Astrocyte of the cerebellum (primary cell): ENCODE measurements at regions of chr9 and their contacts with region 1.

Region 1: DNA sequence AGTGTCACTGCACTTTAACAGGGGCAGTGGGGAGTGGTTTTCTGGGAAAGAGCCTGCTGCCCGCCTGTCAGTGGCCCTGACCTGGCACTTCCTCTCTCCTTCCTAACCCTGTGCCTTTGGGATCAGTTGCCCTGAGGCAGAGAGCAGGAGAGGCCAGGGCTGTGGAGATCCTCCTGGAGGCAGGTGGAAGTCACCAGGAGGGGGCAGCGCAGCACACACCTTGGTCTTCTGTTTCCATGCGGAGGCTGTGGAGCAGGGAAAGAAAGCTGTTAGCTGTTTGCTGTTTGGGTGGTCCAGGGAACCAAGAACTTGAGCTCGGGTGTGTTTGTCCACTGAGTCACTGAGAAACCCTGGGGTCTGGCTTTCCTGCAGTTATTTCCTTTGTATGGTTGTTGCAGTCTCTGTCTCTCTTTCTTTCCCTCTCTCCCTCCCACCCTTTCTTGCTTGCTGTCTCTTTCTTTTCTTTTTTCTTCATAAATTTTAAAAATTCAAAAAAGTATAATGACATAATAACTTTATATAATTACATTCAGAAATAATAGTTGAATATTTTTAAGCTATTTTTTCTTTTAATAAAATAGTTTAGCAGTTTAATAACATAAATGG is 28.1 kb downstream of the NTRK2 start:
- DNase-seq: peak; percentile 66
- H3K4me3 ChIP-seq: no peak overlapping the region
- CTCF ChIP-seq: peak; percentile 83

Region 2: GRCh38 chr9:84652577-84653061 is 45.0 kb before region 1 on chr9:
- in situ Hi-C with region 1: no loop called
- DNase-seq: no peak
- H3K4me3 ChIP-seq: no peak overlapping the region
- CTCF ChIP-seq: no peak

Region 3: DNA sequence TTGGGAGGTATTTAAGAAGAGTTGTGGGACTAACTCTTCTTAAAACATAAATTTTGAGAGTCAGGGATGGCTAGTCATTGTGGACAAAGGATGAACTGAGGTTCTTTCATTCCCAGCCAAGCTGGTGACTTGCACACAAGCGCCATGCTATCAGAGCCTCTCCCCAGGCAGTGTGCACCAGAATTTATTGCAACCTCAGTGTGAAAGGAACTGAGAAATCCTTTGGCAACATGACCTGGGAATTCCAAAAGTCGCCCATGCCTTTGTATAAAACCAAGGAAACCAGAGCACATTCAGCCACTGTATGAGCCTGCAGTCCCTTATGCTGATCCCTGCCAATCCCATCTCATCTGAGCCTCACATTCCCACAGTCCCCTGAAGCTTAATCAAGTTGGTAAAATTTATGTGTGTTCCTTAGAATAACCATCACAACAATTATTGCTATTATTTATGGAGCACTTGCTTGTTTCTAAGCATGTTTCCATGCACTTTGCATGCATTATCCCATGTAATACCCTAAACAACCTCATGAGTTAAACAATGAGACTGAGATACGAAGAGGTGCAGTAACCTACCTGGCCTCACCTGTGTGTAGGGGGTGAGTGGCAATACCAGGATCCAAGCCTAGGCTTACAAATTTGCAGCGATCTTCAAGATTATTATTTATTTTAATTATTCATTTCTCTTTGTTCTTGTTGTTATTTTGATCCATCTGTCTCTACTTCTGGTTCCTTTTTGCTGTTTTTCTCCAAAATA is 88.4 kb after region 1 on chr9:
- in situ Hi-C with region 1: loop called (anchors 5 kb)
- DNase-seq: no peak
- H3K4me3 ChIP-seq: no peak overlapping the region
- CTCF ChIP-seq: no peak